ENCODE measurements at regions of chr20 and their contacts with region 1.

Region 1: GRCh38 chr20:52127309-52127708 is 64.3 kb downstream of the ZFP64 start:
- DNase-seq: no peak
- ATAC-seq: no peak
- H3K4me3 ChIP-seq: no peak overlapping the region
- H3K27ac ChIP-seq: no peak overlapping the region
- H3K4me1 ChIP-seq: no peaks in the 10 kb centered on the region
- CTCF ChIP-seq: no peak
- EP300 ChIP-seq: no peak
- POLR2A ChIP-seq: no peak
- RAD21 ChIP-seq: no peak

Region 2: DNA sequence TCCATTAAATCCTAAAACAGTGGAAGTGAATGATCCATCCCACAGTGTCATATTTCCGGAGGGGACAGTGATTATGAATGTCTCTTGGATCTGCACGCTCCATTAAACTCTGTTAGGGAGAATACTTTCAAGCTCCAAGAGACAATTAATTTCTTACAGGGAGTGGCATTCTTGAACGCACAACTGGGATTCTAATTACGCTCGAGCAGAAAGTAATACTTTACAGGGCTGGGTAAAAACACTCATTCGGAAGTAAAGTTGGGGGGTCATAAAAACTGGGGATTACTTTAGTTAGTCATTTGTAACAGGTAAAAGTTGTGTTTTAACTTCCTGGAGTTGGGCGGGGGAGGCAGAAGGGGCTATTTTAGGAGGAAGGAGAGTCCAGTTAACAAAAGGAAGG is 87.5 kb before region 1 on chr20:
- CTCF ChIA-PET with region 1: no interaction called
- POLR2A ChIA-PET with region 1: no interaction called
- DNase-seq: no peak
- ATAC-seq: no peak
- H3K4me3 ChIP-seq: no peak overlapping the region
- H3K27ac ChIP-seq: no peak overlapping the region
- H3K4me1 ChIP-seq: no peaks in the 10 kb centered on the region
- CTCF ChIP-seq: no peak
- EP300 ChIP-seq: no peak
- POLR2A ChIP-seq: no peak
- RAD21 ChIP-seq: no peak

Region 3: DNA sequence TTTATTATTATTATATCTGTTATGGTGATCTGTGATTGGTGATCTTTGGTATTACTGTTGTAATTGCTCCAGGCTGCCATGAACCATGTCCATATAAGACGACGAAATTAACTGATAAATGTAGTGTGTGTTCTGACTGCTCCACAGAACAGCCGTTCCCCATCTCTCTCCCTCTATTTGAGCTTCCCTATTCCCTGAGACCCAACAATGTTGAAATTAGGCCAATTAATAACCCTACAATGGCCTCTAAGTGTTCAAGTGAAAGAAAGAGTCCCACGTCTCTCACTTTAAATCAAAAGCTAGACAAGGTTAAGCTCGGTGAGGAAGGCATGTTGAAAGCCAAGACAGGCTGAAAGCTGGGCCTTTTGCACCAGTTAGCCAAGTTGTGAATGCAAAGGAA is 12.7 kb after region 1 on chr20:
- CTCF ChIA-PET with region 1: interaction called, 22 read pairs
- POLR2A ChIA-PET with region 1: no interaction called
- DNase-seq: no peak
- ATAC-seq: no peak
- H3K4me3 ChIP-seq: no peak overlapping the region
- H3K27ac ChIP-seq: no peak overlapping the region
- H3K4me1 ChIP-seq: no peaks in the 10 kb centered on the region
- CTCF ChIP-seq: no peak
- EP300 ChIP-seq: no peak
- POLR2A ChIP-seq: no peak
- RAD21 ChIP-seq: no peak

Region 4: DNA sequence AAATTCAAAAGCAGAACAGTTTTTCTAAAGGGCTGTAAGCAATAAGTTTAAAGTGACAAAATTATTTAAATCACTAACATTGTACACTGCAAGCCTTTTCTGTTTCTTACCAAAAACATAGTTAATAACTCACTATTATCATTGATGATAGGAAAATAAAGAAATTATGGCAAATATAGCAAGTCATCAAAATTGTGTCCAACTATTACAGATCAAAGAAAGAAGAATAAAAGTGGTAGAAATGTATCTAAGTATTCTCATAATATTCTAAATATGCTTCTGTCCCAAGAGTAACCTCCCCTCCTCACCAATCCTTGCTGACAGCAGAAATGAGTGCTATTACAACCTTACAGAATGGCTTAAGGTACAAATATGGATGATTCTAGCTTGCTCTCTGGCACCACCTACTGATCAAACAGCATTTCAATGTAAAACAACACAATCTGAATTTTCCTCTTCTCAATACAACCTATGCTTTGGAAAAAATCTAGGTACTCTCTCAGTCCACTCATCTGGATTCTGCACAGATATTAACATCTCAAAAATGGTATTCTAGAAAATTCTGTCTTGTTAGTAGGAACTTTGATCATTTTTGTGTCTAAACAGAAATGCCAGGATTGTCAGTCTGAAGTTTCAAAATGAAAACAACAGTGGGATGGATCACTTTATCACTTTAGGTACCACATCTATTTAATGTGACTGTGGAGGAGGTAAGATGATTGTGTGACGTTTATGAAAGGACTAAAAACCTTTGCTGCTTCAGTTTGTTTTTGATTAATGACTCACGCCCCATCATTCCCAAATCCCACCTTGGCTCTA is 23.3 kb after region 1 on chr20:
- CTCF ChIA-PET with region 1: interaction called, 35 read pairs
- POLR2A ChIA-PET with region 1: no interaction called
- DNase-seq: peak; percentile 56 to 65
- ATAC-seq: peak; percentile 69 to 73; a peak in 5 of 6 replicates
- H3K4me3 ChIP-seq: no peak overlapping the region
- H3K27ac ChIP-seq: no peak overlapping the region
- H3K4me1 ChIP-seq: no peaks in the 10 kb centered on the region
- CTCF ChIP-seq: peak; percentile 75
- EP300 ChIP-seq: no peak
- POLR2A ChIP-seq: no peak
- RAD21 ChIP-seq: peak; percentile 61 to 72

Region 5: GRCh38 chr20:52160621-52161204 is 33.4 kb after region 1 on chr20:
- CTCF ChIA-PET with region 1: interaction called, 10 read pairs
- POLR2A ChIA-PET with region 1: no interaction called
- DNase-seq: no peak
- ATAC-seq: no peak
- H3K4me3 ChIP-seq: no peak overlapping the region
- H3K27ac ChIP-seq: no peak overlapping the region
- H3K4me1 ChIP-seq: no peaks in the 10 kb centered on the region
- CTCF ChIP-seq: no peak
- EP300 ChIP-seq: no peak
- POLR2A ChIP-seq: no peak
- RAD21 ChIP-seq: no peak